ENCODE measurements at regions of chrX and their contacts with region 1.

Region 1: GRCh38 chrX:12974796-12975669 is at the start of gene TMSB4X:
- DNase-seq: peak; percentile 88
- H3K4me3 Mint-ChIP-seq: peak within 1 kb of the TSS; percentile 89
- H3K27ac Mint-ChIP-seq: peak within 1 kb of the TSS; percentile 97
- H3K4me1 Mint-ChIP-seq: peaks cover 39% of the 10 kb centered on the region
- H3K27me3 Mint-ChIP-seq: no peaks in the 10 kb centered on the region
- total RNA-seq, gene TMSB4X: 10,813 to 11,021 TPM

Region 2: GRCh38 chrX:12955882-12956703 is 18.9 kb before region 1 on chrX:
- CTCF ChIA-PET with region 1: interaction called, 50 read pairs
- POLR2A ChIA-PET with region 1: interaction called, 1,343 read pairs
- DNase-seq: peak; percentile 71
- H3K4me3 Mint-ChIP-seq: peak overlapping the region; percentile 80
- H3K27ac Mint-ChIP-seq: peak overlapping the region; percentile 99
- H3K4me1 Mint-ChIP-seq: peaks cover 72% of the 10 kb centered on the region
- H3K27me3 Mint-ChIP-seq: no peaks in the 10 kb centered on the region

Region 3: DNA sequence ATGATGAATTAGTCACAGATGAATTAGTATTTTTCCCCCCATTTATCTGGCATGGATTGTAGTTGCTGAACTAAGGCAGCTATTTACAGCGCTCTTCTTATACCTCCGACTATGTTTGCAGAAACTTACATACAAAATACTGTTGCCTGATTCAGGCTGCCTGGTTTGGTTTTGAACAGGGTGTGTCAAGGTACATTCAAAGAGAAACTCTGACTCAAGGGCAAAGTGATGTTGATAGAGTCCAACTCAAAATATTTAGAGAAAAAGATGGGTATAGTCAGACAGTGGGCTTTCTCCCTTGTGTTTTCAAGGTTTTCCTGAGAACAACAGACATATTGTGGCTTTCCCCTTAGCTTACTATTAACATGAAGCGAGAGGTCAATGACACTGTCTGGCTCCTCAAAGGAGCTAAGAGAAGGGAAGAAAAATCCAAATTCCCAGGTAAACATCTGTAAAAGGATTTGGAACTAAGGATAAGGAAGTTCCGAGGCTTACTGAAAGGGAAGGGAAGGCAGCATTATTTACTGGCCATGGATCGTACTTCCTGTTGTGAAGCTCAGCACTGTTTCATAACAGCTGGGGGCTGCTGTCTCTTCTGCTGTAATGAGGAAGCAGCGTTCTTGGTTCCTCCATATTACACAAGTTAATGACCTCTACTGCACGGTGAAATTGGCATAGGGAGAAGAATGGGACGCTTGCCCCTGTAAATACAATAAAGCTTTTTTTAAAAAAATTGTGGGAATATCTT is 38.5 kb after region 1 on chrX:
- CTCF ChIA-PET with region 1: no interaction called
- POLR2A ChIA-PET with region 1: interaction called, 693 read pairs
- DNase-seq: no peak
- H3K4me3 Mint-ChIP-seq: peak overlapping the region; percentile 6
- H3K27ac Mint-ChIP-seq: peak overlapping the region; percentile 84
- H3K4me1 Mint-ChIP-seq: peaks cover 66% of the 10 kb centered on the region
- H3K27me3 Mint-ChIP-seq: no peaks in the 10 kb centered on the region

Region 4: GRCh38 chrX:13051529-13052172 is 76.6 kb after region 1 on chrX:
- CTCF ChIA-PET with region 1: interaction called, 6 read pairs
- POLR2A ChIA-PET with region 1: interaction called, 29 read pairs
- DNase-seq: peak; percentile 20
- H3K4me3 Mint-ChIP-seq: no peak overlapping the region
- H3K27ac Mint-ChIP-seq: peak overlapping the region; percentile 92
- H3K4me1 Mint-ChIP-seq: peaks cover 65% of the 10 kb centered on the region
- H3K27me3 Mint-ChIP-seq: no peaks in the 10 kb centered on the region

Region 5: GRCh38 chrX:13087322-13088155 is 112.5 kb after region 1 on chrX:
- CTCF ChIA-PET with region 1: interaction called, 210 read pairs
- POLR2A ChIA-PET with region 1: interaction called, 1,502 read pairs
- DNase-seq: peak; percentile 68
- H3K4me3 Mint-ChIP-seq: peak overlapping the region; percentile 81
- H3K27ac Mint-ChIP-seq: peak overlapping the region; percentile 99
- H3K4me1 Mint-ChIP-seq: peaks cover 85% of the 10 kb centered on the region
- H3K27me3 Mint-ChIP-seq: no peaks in the 10 kb centered on the region

Region 6: DNA sequence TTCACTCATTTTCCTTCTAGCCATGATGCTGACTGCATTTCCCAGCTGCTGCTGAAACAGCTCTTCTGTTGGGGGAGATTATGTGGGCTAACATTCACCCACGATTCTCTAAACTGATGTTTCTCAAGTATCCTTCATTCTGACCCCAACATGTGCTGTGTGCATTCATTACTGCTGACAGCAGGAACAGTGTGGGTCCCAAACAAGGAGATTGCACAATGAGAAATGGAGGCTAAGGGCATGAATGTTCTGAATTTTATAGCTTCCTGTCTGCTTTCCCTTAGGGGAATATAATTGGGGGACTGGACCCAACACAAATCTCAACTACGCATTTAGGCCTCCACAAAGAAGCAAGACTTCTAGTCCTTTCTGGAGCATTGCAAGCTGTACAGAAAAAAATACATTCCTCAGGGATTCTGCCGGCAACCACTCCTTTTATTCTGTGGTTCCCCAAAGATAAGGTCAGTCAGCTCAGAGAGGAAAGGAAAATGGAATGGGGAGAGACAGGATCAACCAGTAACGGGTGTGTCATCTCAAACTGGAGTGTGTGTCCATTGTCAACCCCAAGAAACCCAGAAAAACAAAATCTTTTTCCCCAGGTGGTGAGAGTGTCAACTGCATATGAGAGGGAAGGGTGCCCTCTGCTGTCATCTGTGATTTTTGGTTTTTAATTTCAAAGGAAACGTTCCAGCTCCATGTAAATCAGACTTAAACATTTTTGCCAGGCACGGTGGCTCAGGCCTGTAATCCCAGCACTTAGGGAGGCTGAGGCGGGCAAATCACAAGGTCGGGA is 512.9 kb after region 1 on chrX:
- CTCF ChIA-PET with region 1: interaction called, 9 read pairs
- POLR2A ChIA-PET with region 1: interaction called, 28 read pairs
- DNase-seq: peak; percentile 38
- H3K4me3 Mint-ChIP-seq: no peak overlapping the region
- H3K27ac Mint-ChIP-seq: peak overlapping the region; percentile 29
- H3K4me1 Mint-ChIP-seq: peaks cover 18% of the 10 kb centered on the region
- H3K27me3 Mint-ChIP-seq: no peaks in the 10 kb centered on the region

Region 7: DNA sequence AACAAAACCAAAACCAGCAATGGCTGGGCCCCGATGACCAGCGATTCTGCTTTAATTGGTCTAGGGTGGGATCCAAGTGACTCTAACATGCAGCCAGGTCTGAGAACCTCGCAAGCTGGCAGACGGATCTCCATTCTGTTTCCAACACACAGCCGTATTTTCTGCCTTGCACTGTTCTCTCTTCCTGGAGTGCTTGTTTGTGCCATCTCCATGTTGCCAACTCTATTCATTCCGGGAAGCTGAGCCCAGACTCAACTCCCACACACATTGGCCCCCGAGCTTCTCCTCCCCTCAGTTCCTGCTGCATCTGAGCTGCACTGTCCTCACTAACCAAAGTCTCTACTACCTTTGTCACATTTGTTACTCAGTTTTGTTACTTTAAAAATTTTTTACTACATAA is 1019.1 kb after region 1 on chrX:
- CTCF ChIA-PET with region 1: no interaction called
- POLR2A ChIA-PET with region 1: no interaction called
- DNase-seq: no peak
- H3K4me3 Mint-ChIP-seq: no peak overlapping the region
- H3K27ac Mint-ChIP-seq: no peak overlapping the region
- H3K4me1 Mint-ChIP-seq: no peaks in the 10 kb centered on the region
- H3K27me3 Mint-ChIP-seq: peaks cover 2% of the 10 kb centered on the region

Measured in activated CD4-positive, alpha-beta memory T cell treated with anti-CD3 and anti-CD28 coated beads, Interleukin-2, amount 10 ng/mL, durations not matched to agents 7 days and 5 days (primary cell).